PC-9 (cell line): ENCODE measurements at regions of chr1 and their contacts with region 1.

Region 1: GRCh38 chr1:75023005-75023404 is 111.2 kb upstream of the LHX8 start:
- DNase-seq: no peak
- H3K4me3 ChIP-seq: no peak overlapping the region
- H3K27ac ChIP-seq: no peak overlapping the region
- H3K4me1 ChIP-seq: no peaks in the 10 kb centered on the region
- H3K27me3 ChIP-seq: no peaks in the 10 kb centered on the region
- CTCF ChIP-seq: no peak

Region 2: GRCh38 chr1:76615253-76616035 is 1592.4 kb after region 1 on chr1:
- CTCF ChIA-PET with region 1: no interaction called
- POLR2A ChIA-PET with region 1: no interaction called
- intact Hi-C with region 1: loop called (anchors 10 kb)
- DNase-seq: no peak
- H3K4me3 ChIP-seq: no peak overlapping the region
- H3K27ac ChIP-seq: no peak overlapping the region
- H3K4me1 ChIP-seq: no peaks in the 10 kb centered on the region
- H3K27me3 ChIP-seq: no peaks in the 10 kb centered on the region
- CTCF ChIP-seq: no peak